ENCODE measurements at regions of chr4 and their contacts with region 1.

Region 1: DNA sequence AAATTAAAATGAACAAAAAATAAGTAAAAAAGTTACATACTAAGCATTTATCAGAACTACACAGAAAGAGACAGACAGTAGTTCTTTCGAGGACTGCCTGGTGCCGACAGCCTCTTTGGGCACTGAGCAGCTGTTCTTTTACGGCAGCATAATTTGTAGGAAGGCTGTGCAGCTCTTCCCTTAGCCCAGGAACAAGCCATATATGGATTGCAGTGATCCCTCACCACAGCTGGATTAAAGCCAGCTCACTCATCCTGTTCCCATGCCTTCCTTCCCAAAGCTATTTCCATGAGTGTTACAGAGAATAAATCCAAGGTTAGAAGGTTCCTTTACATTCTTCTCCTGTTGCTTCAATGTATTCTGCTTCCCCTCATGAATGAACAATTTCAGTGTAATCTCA is 71.7 kb downstream of the DDX60L start:
- DNase-seq: peak; percentile 71 to 74
- ATAC-seq: peak; percentile 98
- H3K4me3 ChIP-seq: peak overlapping the region in 1 of 4 donors; percentile 3
- H3K27ac ChIP-seq: peak overlapping the region; percentile 69 to 72 (median 71)
- H3K4me1 ChIP-seq: peaks cover 28 to 39% of the 10 kb centered on the region in 2 donors
- H3K27me3 ChIP-seq: no peaks in the 10 kb centered on the region
- CTCF ChIP-seq: no peak
- POLR2A ChIP-seq: peak in 1 of 2 donors; percentile 23

Region 2: GRCh38 chr4:167428156-167428555 is 980.5 kb before region 1 on chr4:
- in situ Hi-C with region 1: no loop called
- intact Hi-C with region 1: no loop called
- DNase-seq: no peak
- ATAC-seq: no peak
- H3K4me3 ChIP-seq: no peak overlapping the region
- H3K27ac ChIP-seq: no peak overlapping the region
- H3K4me1 ChIP-seq: no peaks in the 10 kb centered on the region
- H3K27me3 ChIP-seq: no peaks in the 10 kb centered on the region
- CTCF ChIP-seq: no peak
- POLR2A ChIP-seq: no peak

Region 3: DNA sequence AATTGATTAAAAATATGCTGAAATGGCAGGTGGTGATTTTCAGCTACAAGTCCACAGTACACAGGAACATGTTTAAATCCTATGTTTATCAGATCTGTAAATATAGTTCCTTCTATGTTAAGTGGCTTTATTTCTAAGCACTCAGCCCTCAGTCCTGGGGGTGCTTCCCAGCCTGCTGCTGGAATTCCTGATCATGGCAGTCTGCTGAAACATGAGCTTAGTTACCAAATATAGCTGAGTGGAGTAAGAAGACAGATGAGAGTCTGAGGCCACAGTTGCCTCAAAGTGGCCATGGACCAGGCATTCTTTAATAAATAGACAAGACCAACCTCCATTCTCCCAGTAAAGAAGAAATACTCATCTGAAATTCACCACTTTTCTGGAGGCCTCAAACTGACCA is 73.0 kb before region 1 on chr4:
- in situ Hi-C with region 1: no loop called
- intact Hi-C with region 1: loop called (anchors 5 kb)
- DNase-seq: peak in 1 of 2 donors; percentile 52
- ATAC-seq: peak; percentile 99 to 100
- H3K4me3 ChIP-seq: no peak overlapping the region
- H3K27ac ChIP-seq: peak overlapping the region; percentile 14 to 65 (median 46)
- H3K4me1 ChIP-seq: peaks cover 10 to 11% of the 10 kb centered on the region in 2 donors
- H3K27me3 ChIP-seq: no peaks in the 10 kb centered on the region
- CTCF ChIP-seq: no peak
- POLR2A ChIP-seq: no peak